HepG2 (cell line): ENCODE measurements at regions of chr1 and their contacts with region 1.

Region 1: GRCh38 chr1:15172405-15173259 is 19.1 kb downstream of the TMEM51 start:
- DNase-seq: peak; percentile 80
- ATAC-seq: peak; percentile 78
- H3K4me3 ChIP-seq: peak overlapping the region in 1 of 3 experiments; percentile 28; a peak in 1 of 6 replicates
- H3K27ac ChIP-seq: peak overlapping the region; percentile 58
- H3K4me1 ChIP-seq: peaks cover 74% of the 10 kb centered on the region
- H3K27me3 ChIP-seq: no peaks in the 10 kb centered on the region
- CTCF ChIP-seq: peak; percentile 12; the same call in 1 of the 2 replicates
- EP300 ChIP-seq: no peak
- POLR2A ChIP-seq: no peak
- RAD21 ChIP-seq: no peak

Region 2: GRCh38 chr1:15188130-15188524 is 15.5 kb after region 1 on chr1:
- CTCF ChIA-PET with region 1: no interaction called
- POLR2A ChIA-PET with region 1: interaction called, 9 read pairs
- in situ Hi-C with region 1: no loop called
- intact Hi-C with region 1: loop called (anchors 2 kb)
- DNase-seq: no peak
- ATAC-seq: no peak
- H3K4me3 ChIP-seq: no peak overlapping the region
- H3K27ac ChIP-seq: peak overlapping the region; percentile 4
- H3K4me1 ChIP-seq: peaks cover 90% of the 10 kb centered on the region
- H3K27me3 ChIP-seq: no peaks in the 10 kb centered on the region
- CTCF ChIP-seq: no peak
- EP300 ChIP-seq: no peak
- POLR2A ChIP-seq: no peak
- RAD21 ChIP-seq: no peak

Region 3: DNA sequence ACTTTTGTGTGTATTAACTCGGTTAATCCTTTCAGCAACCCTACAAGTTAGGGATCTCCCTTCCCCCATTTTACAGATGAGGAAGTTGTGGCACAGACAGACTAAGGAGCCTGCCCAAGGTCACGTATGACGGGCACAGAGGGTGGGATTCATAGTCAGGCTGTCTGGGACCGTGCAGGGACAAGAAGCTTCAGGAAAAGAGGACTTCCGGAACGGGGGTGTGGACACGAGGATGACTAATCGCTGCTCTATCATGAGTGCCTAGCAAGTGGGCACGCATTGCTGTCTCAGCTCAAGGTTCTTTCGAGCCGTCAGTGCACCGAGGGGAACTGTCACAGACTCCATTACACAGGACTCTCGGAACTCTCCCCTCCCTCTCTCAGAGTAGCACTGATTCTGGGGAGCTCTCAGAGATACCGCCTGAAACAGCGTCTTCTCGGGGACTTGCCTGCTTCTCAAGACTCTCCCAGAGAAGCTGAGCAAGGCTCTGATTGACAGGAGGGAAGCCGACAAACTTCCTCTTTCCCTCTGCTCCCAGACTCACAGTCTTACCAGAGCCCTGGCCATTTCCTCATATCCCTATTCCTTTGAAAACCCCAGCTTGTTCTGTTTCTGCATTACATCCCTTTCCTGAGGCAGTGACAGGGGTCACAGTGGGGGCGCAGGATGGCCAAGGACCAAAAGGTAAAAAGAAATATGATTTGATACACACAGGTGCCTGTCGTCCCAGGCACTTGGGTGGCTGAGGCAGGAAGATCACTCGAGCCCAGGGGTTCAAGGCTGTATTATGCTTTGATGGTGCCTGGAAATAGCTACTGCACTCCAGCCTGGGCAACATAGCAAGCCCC is 88.7 kb after region 1 on chr1:
- CTCF ChIA-PET with region 1: no interaction called
- POLR2A ChIA-PET with region 1: no interaction called
- in situ Hi-C with region 1: no loop called
- intact Hi-C with region 1: no loop called
- DNase-seq: peak; percentile 68
- ATAC-seq: peak; percentile 82
- H3K4me3 ChIP-seq: peak overlapping the region in 1 of 3 experiments; percentile 41; a peak in 2 of 6 replicates
- H3K27ac ChIP-seq: no peak overlapping the region
- H3K4me1 ChIP-seq: peaks cover 30% of the 10 kb centered on the region
- H3K27me3 ChIP-seq: peaks cover 0 to 6% of the 10 kb centered on the region in 2 experiments; a peak in 2 of 5 replicates
- CTCF ChIP-seq: no peak
- EP300 ChIP-seq: no peak; a peak in 1 of 4 replicates
- POLR2A ChIP-seq: no peak
- RAD21 ChIP-seq: no peak